Sigmoid colon (tissue), 7 donors: ENCODE measurements at regions of chr1 and their contacts with region 1.

Region 1: DNA sequence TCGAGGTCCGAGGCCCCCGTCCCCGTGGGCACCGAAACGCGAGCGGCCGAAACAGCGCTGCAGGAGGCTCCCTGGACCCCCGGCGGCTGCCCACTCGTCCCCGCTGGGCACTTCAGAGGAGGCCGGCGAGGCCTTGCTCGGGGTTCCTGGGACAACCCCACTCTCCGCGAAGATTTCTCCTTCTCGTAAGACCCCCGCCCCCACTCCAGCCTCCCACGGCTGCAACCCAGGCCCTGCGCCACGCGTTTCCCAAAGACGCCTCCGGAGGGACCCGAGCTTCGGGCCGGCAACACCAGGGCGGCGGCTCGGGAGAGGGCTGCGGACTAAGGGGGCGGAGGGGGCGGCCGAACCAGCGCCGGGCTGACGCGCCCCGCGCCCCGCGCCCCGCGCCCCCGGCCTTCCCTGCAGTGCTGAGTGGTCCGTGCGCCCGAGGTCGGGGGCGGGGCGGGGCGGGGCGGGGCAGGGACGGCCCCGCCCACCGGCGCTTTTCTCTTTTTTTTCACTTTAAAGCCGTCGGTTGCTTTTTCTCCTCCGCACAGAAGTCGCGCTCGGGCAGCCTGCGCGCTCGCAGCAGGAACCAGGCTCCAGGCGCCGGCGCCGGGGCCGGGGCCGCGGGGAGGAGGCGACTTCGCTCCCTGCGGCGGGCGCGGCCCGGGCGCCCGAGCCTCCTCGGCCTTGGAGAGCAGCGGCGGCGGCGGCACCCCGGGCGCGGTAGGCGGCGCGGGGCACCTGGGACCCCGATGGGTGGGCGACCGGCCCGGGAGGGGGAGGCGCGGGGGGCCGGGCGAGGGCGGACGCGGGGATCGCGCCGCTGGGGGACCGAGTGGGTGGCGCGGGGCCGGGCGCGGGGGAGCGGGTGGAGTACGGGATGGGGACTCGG is at the start of gene SPSB1:
- DNase-seq: peak; percentile 90
- H3K4me3 ChIP-seq: peak within 1 kb of the TSS; percentile 80 to 99 (median 88)
- H3K27ac ChIP-seq: peak within 1 kb of the TSS; percentile 90 to 98 (median 94)
- H3K4me1 ChIP-seq: peaks cover 0 to 61% (median 38%) of the 10 kb centered on the region in 4 donors
- H3K27me3 ChIP-seq: no peaks in the 10 kb centered on the region
- CTCF ChIP-seq: no peak
- EP300 ChIP-seq: no peak
- POLR2A ChIP-seq: peak; percentile 26 to 31
- total RNA-seq, gene SPSB1: 17.4 to 34.3 (median 24.1) TPM

Region 2: GRCh38 chr1:7847599-7847998 is 1445.0 kb before region 1 on chr1:
- intact Hi-C with region 1: no loop called
- DNase-seq: no peak
- H3K4me3 ChIP-seq: no peak overlapping the region
- H3K27ac ChIP-seq: no peak overlapping the region
- H3K4me1 ChIP-seq: peaks cover 0 to 12% (median 5%) of the 10 kb centered on the region in 4 donors
- H3K27me3 ChIP-seq: no peaks in the 10 kb centered on the region
- CTCF ChIP-seq: no peak
- EP300 ChIP-seq: no peak
- POLR2A ChIP-seq: no peak

Region 3: GRCh38 chr1:9338397-9339246 is 46.0 kb after region 1 on chr1:
- intact Hi-C with region 1: loop called (anchors 5 kb)
- DNase-seq: peak; percentile 84
- H3K4me3 ChIP-seq: peak overlapping the region in 1 of 4 donors; percentile 9
- H3K27ac ChIP-seq: peak overlapping the region; percentile 59 to 85 (median 82)
- H3K4me1 ChIP-seq: peaks cover 0 to 93% (median 57%) of the 10 kb centered on the region in 4 donors
- H3K27me3 ChIP-seq: no peaks in the 10 kb centered on the region
- CTCF ChIP-seq: no peak
- EP300 ChIP-seq: no peak
- POLR2A ChIP-seq: no peak

Region 4: DNA sequence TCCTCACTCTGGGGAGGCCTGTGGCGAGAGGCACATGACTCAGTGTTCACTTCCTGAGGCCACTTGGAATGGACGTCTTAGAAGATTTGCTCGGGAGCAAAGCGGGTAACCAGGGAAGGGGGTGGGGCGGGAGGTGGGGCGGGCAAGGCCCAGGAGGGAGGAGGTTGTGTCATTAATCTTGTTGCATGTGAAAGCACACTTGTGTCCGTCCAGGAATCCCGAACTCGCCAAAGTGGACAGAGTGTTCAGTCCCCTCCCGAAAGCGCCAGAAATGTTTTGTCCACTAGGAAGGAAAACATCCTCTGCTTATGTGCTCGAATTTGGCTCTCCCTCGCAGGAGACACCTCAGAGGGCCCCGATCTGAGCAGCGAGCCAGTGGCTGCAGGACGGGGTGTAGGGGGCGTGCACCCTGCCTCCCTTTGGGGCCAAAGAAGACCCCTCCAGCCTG is 84.3 kb after region 1 on chr1:
- intact Hi-C with region 1: loop called (anchors 2 kb)
- DNase-seq: peak; percentile 96
- H3K4me3 ChIP-seq: peak overlapping the region in 1 of 4 donors; percentile 9
- H3K27ac ChIP-seq: peak overlapping the region; percentile 86 to 93 (median 90)
- H3K4me1 ChIP-seq: peaks cover 0 to 80% (median 68%) of the 10 kb centered on the region in 4 donors
- H3K27me3 ChIP-seq: no peaks in the 10 kb centered on the region
- CTCF ChIP-seq: peak in 1 of 4 experiments; percentile 27
- EP300 ChIP-seq: peak; percentile 27 to 98 (median 90)
- POLR2A ChIP-seq: no peak

Region 5: GRCh38 chr1:9428601-9429341 is 136.2 kb after region 1 on chr1:
- intact Hi-C with region 1: loop called (anchors 2 kb)
- DNase-seq: peak; percentile 99
- H3K4me3 ChIP-seq: peak overlapping the region; percentile 45 to 61 (median 50)
- H3K27ac ChIP-seq: peak overlapping the region; percentile 85 to 90 (median 88)
- H3K4me1 ChIP-seq: peaks cover 0 to 12% (median 10%) of the 10 kb centered on the region in 4 donors
- H3K27me3 ChIP-seq: no peaks in the 10 kb centered on the region
- CTCF ChIP-seq: no peak
- EP300 ChIP-seq: peak in 1 of 4 donors; percentile 92
- POLR2A ChIP-seq: peak; percentile 48 to 78

Region 6: DNA sequence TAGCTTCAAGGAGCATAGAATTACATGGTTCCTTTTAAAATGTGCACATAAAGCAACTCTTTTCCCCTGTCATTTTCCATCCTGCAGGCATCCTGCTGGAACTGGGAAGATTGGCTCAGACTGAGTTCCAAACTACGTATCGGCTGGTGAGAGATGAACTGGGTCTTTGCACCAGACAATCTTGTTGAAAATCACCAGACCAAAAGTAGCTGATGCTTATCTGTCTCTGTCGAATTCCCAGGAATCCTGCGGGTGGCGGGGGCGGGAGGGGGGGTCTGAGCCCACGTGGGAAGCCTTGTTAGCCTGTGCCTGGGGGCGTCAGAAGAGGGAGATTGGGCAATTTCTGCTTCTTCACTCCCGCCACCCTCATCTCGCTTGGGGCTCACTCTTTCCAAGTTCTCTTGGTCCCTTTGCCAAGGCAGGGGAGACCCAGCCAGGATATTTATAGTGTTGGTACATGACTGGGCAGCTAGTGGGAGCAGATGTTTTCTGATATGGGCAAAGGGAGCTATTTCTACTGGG is 156.6 kb after region 1 on chr1:
- intact Hi-C with region 1: loop called (anchors 2 kb)
- DNase-seq: no peak
- H3K4me3 ChIP-seq: peak overlapping the region in 1 of 4 donors; percentile 6
- H3K27ac ChIP-seq: peak overlapping the region in 3 of 4 donors; percentile 55 to 79 (median 56)
- H3K4me1 ChIP-seq: peaks cover 0 to 36% (median 20%) of the 10 kb centered on the region in 4 donors
- H3K27me3 ChIP-seq: no peaks in the 10 kb centered on the region
- CTCF ChIP-seq: no peak
- EP300 ChIP-seq: no peak
- POLR2A ChIP-seq: no peak

Region 7: DNA sequence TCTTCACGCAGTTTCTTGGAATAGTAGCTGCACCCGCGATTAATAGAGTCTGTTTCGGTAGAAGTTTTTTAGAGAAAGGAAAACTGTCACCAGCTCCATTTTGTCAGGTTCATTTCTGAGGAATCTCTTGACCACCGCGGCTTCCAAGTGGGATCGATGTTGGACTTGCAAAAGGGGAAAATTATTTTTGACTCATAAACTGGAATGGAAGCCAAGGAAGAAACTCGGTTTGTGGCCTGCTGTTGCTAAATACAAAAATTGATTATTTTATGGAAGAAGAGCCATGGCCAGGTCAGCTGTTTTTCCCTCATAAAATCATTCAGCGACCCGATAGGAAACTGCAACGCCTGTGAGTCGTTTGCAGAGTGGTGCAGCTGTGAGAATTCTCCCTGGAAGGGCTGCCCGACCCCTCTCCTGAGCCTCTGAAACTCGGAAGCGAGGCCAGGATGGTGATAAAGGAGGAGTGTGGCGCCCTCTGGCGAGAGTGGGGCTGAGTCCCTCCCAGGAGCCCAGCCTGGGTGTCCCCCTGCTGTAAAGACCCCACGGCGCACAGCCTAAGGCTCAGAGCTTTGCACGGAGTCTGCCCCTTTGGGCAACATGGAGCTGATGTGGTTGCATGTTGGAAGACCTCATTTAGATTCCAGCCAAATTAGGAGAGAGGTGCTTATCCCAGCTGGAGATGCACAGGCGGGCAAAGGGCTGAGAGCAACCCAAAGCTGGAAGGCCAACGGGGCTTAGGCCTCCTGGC is 163.1 kb after region 1 on chr1:
- intact Hi-C with region 1: loop called (anchors 1 kb)
- DNase-seq: peak; percentile 85
- H3K4me3 ChIP-seq: no peak overlapping the region
- H3K27ac ChIP-seq: peak overlapping the region in 2 of 4 donors; percentile 9 to 44
- H3K4me1 ChIP-seq: peaks cover 0 to 10% (median 5%) of the 10 kb centered on the region in 4 donors
- H3K27me3 ChIP-seq: no peaks in the 10 kb centered on the region
- CTCF ChIP-seq: peak; percentile 78 to 86 (median 79)
- EP300 ChIP-seq: no peak
- POLR2A ChIP-seq: no peak